ENCODE measurements at regions of chr18 and their contacts with region 1.

Region 1: DNA sequence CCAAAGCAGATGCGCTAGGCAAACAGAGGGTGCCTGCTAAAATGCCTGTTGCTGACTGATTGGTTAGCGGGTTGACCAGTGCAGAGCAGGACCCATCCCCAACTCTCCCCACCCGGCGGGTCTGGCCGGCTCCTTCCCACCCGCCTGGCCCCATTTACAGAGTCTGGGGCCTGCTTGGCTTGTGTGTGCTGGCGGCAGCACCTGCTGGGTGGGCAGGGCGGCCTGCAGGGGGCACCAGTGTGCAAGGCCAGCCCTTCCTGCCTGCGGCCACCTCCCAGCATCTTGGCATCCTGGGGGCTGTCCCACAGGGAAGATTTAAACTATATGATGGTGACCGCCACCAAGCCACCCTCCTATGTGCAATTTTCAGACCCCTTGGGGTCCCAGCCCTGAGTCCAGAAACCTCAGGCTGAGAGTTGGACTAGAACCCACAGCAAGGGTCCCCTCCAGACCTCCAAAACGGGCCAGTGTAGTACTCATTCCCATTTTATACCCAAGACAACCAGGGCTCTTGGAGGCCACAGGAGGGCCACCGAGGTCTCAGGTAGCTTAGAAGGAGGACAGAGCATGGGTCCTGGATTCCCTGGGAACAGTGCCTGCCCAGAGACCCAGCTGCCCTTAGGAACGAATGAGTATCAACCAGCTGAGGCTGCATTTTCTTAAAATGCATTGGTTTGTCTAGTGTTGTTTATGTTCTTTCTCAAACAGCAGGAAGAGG is 173.6 kb downstream of the SMAD7 start:
- DNase-seq: peak in 1 of 2 donors; percentile 72
- ATAC-seq: peak in 6 of 8 donors; percentile 5 to 27 (median 18)
- H3K4me3 ChIP-seq: no peak overlapping the region
- H3K27ac ChIP-seq: peak overlapping the region in 4 of 10 donors; percentile 27 to 99 (median 60)
- H3K4me1 ChIP-seq: peaks cover 43 to 88% (median 70%) of the 10 kb centered on the region in 9 donors
- H3K27me3 ChIP-seq: no peaks in the 10 kb centered on the region
- CTCF ChIP-seq: peak; percentile 82 to 96 (median 90)

Region 2: DNA sequence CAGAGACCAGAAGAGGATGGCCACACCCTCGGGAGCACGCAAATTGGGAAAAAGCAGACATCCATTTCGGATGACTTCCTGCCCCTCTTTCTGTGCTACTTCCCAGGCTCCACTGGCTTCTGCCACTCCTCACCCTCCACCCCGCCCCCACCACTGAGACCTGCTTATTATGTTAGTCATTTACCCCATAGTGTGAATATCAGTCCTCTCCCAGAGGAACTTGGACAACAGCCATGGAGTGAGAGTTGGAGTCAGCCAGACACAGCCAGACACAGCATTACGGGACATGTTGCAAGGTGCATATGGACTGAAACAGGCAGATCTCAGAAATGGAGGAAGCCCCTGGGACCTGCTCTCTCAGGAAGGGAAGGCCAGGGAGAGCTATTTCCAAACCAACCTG is 186.5 kb before region 1 on chr18:
- intact Hi-C with region 1: no loop called
- DNase-seq: no peak
- ATAC-seq: peak in 6 of 8 donors; percentile 6 to 62 (median 36)
- H3K4me3 ChIP-seq: no peak overlapping the region
- H3K27ac ChIP-seq: peak overlapping the region in 9 of 10 donors; percentile 19 to 86 (median 74)
- H3K4me1 ChIP-seq: peaks cover 6 to 64% (median 31%) of the 10 kb centered on the region in 9 donors
- H3K27me3 ChIP-seq: no peaks in the 10 kb centered on the region
- CTCF ChIP-seq: no peak

Region 3: GRCh38 chr18:48711651-48712486 is 65.3 kb before region 1 on chr18:
- intact Hi-C with region 1: loop called in 1 of 10 experiments (anchors 10 kb)
- DNase-seq: peak; percentile 28 to 69
- ATAC-seq: peak; percentile 51 to 76 (median 68)
- H3K4me3 ChIP-seq: no peak overlapping the region
- H3K27ac ChIP-seq: peak overlapping the region in 7 of 10 donors; percentile 14 to 92 (median 70)
- H3K4me1 ChIP-seq: peaks cover 23 to 86% (median 59%) of the 10 kb centered on the region in 9 donors
- H3K27me3 ChIP-seq: no peaks in the 10 kb centered on the region
- CTCF ChIP-seq: peak in 8 of 9 donors; percentile 50 to 75 (median 66)

Region 4: DNA sequence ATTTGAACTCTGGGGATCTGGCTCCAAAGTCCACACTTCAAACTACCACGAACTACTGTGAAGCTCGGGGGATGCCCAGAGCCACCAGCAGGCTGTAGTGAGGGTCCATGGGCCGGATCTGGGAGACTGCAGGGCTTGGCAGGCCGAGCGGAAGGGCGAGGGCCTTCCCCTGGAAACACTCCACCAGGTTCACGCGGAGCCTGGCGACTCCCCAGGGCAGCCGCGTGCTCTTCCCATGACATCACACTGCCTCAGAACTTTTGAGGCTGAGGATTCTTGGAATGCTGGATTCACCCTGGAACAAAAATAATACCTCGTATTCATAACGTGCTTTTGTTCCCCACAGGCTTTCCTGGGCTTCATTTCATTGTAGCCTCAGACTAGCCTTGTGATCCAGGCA is 27.4 kb before region 1 on chr18:
- intact Hi-C with region 1: no loop called
- DNase-seq: peak; percentile 78 to 83
- ATAC-seq: peak; percentile 73 to 97 (median 92)
- H3K4me3 ChIP-seq: no peak overlapping the region
- H3K27ac ChIP-seq: peak overlapping the region in 9 of 10 donors; percentile 9 to 88 (median 73)
- H3K4me1 ChIP-seq: peaks cover 11 to 56% (median 40%) of the 10 kb centered on the region in 9 donors
- H3K27me3 ChIP-seq: no peaks in the 10 kb centered on the region
- CTCF ChIP-seq: peak in 8 of 9 donors; percentile 27 to 72 (median 54)

Region 5: GRCh38 chr18:48800876-48801727 is 23.9 kb after region 1 on chr18:
- intact Hi-C with region 1: loop called in 1 of 10 experiments (anchors 1 kb)
- DNase-seq: no peak
- ATAC-seq: no peak
- H3K4me3 ChIP-seq: no peak overlapping the region
- H3K27ac ChIP-seq: peak overlapping the region in 9 of 10 donors; percentile 24 to 84 (median 76)
- H3K4me1 ChIP-seq: peaks cover 19 to 75% (median 51%) of the 10 kb centered on the region in 9 donors
- H3K27me3 ChIP-seq: no peaks in the 10 kb centered on the region
- CTCF ChIP-seq: no peak

Region 6: GRCh38 chr18:48842259-48843061 is 65.3 kb after region 1 on chr18:
- intact Hi-C with region 1: loop called in 2 of 10 experiments (anchors 2 to 5 kb)
- DNase-seq: peak; percentile 42 to 65
- ATAC-seq: peak; percentile 37 to 85 (median 76)
- H3K4me3 ChIP-seq: no peak overlapping the region
- H3K27ac ChIP-seq: peak overlapping the region; percentile 72 to 94 (median 84)
- H3K4me1 ChIP-seq: peaks cover 12 to 78% (median 63%) of the 10 kb centered on the region in 9 donors
- H3K27me3 ChIP-seq: no peaks in the 10 kb centered on the region
- CTCF ChIP-seq: no peak

Region 7: GRCh38 chr18:48940854-48941611 is 163.8 kb after region 1 on chr18:
- intact Hi-C with region 1: loop called in 5 of 10 experiments (anchors 5 kb)
- DNase-seq: no peak
- ATAC-seq: no peak
- H3K4me3 ChIP-seq: peak overlapping the region in 5 of 10 donors; percentile 1 to 94 (median 43)
- H3K27ac ChIP-seq: peak overlapping the region in 9 of 10 donors; percentile 63 to 99 (median 81)
- H3K4me1 ChIP-seq: peaks cover 59 to 99% (median 97%) of the 10 kb centered on the region in 9 donors
- H3K27me3 ChIP-seq: no peaks in the 10 kb centered on the region
- CTCF ChIP-seq: no peak

Region 8: GRCh38 chr18:49041435-49042245 is 264.5 kb after region 1 on chr18:
- intact Hi-C with region 1: loop called in 7 of 10 experiments (anchors 5 to 10 kb)
- DNase-seq: peak; percentile 37 to 66
- ATAC-seq: peak; percentile 56 to 86 (median 71)
- H3K4me3 ChIP-seq: no peak overlapping the region
- H3K27ac ChIP-seq: peak overlapping the region in 1 of 10 donors; percentile 22
- H3K4me1 ChIP-seq: peaks cover 0 to 14% (median 8%) of the 10 kb centered on the region in 9 donors
- H3K27me3 ChIP-seq: no peaks in the 10 kb centered on the region
- CTCF ChIP-seq: peak; percentile 49 to 75 (median 69)

Region 9: GRCh38 chr18:49178736-49179135 is 401.6 kb after region 1 on chr18:
- intact Hi-C with region 1: loop called in 4 of 10 experiments (anchors 5 to 10 kb)
- DNase-seq: peak in 1 of 2 donors; percentile 35
- ATAC-seq: peak in 2 of 8 donors; percentile 40 to 56
- H3K4me3 ChIP-seq: no peak overlapping the region
- H3K27ac ChIP-seq: no peak overlapping the region
- H3K4me1 ChIP-seq: peaks cover 0 to 25% (median 7%) of the 10 kb centered on the region in 9 donors
- H3K27me3 ChIP-seq: no peaks in the 10 kb centered on the region
- CTCF ChIP-seq: peak in 8 of 9 donors; percentile 16 to 67 (median 56)

Measured in heart right ventricle (tissue), 16 donors.